ENCODE measurements at regions of chr15 and their contacts with region 1.

Region 1: DNA sequence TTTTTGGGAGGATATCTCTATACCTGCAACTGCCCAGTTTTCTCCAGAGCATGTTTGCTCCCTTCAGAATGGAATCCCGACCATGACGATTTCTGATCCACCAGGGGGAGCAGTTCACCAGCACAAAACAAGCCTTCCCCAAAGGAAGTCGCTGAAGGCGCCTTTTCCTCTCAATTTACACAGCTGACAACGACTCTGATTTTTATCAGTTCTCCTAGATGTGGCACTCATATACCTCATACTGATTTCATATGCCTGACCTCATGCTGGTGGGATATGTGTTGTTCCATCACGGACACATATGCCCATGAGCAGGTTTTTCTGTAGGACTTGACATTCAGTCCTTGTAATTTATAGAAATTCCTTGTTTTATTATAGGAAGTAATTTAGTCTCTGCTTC is 1028.2 kb downstream of the MCTP2 start:
- DNase-seq: peak; percentile 68
- ATAC-seq: peak; percentile 30
- H3K4me3 Mint-ChIP-seq: no peak overlapping the region
- H3K27ac Mint-ChIP-seq: no peak overlapping the region
- H3K4me1 Mint-ChIP-seq: no peaks in the 10 kb centered on the region
- H3K27me3 Mint-ChIP-seq: peaks cover 31% of the 10 kb centered on the region

Region 2: DNA sequence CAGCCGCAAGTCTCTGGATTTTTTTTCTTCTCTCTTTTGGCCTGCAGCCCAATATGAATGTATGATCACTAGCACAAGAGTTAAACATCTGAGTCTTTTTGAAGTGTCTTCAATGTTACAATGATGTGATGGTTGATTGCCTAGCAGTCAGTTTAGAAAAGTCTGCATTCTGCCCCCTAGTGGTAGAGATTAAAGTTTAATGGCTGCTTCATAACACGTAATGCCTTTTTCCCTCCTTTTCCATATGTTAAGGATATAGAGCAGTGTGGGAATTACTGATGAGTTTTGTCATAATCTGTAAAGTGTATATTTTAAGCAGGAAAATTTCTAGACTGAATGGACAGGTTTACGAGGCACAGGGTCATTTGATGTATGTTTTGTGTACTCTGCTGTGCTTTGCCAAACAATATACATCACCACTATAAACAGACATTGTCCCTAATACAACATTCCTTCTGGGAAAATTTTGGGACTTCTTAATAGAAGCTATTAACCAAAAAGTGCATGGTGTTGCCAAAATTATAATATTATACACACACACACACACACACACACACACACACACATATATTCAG is 32.5 kb after region 1 on chr15:
- CTCF ChIA-PET with region 1: interaction called, 5 read pairs
- POLR2A ChIA-PET with region 1: no interaction called
- intact Hi-C with region 1: loop called in 1 of 2 experiments (anchors 1 kb)
- DNase-seq: no peak
- ATAC-seq: no peak
- H3K4me3 Mint-ChIP-seq: no peak overlapping the region
- H3K27ac Mint-ChIP-seq: no peak overlapping the region
- H3K4me1 Mint-ChIP-seq: no peaks in the 10 kb centered on the region
- H3K27me3 Mint-ChIP-seq: peaks cover 29% of the 10 kb centered on the region

Region 3: GRCh38 chr15:95826412-95827195 is 567.1 kb after region 1 on chr15:
- CTCF ChIA-PET with region 1: interaction called, 3 read pairs
- POLR2A ChIA-PET with region 1: no interaction called
- intact Hi-C with region 1: loop called in 1 of 2 experiments (anchors 10 kb)
- DNase-seq: peak; percentile 6
- ATAC-seq: no peak
- H3K4me3 Mint-ChIP-seq: no peak overlapping the region
- H3K27ac Mint-ChIP-seq: no peak overlapping the region
- H3K4me1 Mint-ChIP-seq: no peaks in the 10 kb centered on the region
- H3K27me3 Mint-ChIP-seq: no peaks in the 10 kb centered on the region

Region 4: DNA sequence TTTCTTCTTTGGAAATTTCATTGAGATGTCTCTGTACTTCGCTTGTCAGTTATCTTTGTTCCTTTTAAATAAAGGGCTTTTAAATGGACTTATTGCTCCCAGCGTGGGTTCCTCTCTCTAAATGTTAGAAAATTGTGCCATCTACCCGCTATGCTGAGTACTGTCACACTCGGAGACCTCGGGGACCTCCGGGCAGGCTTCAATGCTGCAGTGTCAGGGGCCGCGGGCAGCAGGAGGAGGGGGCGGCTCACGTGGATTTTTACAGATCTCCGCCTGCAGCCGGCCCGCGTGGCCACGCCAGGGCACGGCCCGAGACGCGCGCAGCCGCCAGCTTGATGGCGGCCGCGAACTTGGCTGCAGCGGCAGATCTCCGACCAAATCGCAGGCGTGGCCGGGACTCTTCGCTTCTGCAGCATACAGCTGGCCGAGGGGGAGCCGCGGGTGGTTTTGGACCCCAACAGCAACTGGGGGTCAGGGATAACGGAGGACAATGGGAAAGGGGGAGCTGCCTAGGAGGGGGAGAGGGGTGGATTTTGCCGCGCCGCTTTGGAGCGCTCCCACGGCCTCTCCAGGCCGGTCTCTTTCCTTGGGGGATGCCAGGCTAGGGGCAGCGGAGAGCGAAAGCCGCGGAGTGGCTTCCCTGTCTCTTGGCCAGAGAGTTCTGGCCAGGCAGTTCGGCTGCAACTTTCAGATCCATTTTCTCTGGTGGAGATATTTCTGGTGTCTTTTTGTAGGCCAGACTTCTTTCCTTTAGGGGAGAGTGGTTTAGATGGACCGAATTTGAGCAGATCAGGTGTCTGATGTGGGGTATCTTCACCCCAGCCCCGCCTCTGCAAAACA is 1086.3 kb after region 1 on chr15:
- CTCF ChIA-PET with region 1: no interaction called
- POLR2A ChIA-PET with region 1: no interaction called
- intact Hi-C with region 1: loop called (anchors 1 to 5 kb)
- DNase-seq: no peak
- ATAC-seq: no peak
- H3K4me3 Mint-ChIP-seq: no peak overlapping the region
- H3K27ac Mint-ChIP-seq: no peak overlapping the region
- H3K4me1 Mint-ChIP-seq: peaks cover 3% of the 10 kb centered on the region
- H3K27me3 Mint-ChIP-seq: peaks cover 86% of the 10 kb centered on the region

Region 5: GRCh38 chr15:97234851-97235610 is 1975.5 kb after region 1 on chr15:
- CTCF ChIA-PET with region 1: no interaction called
- POLR2A ChIA-PET with region 1: no interaction called
- intact Hi-C with region 1: loop called (anchors 10 kb)
- DNase-seq: peak; percentile 49
- ATAC-seq: no peak
- H3K4me3 Mint-ChIP-seq: no peak overlapping the region
- H3K27ac Mint-ChIP-seq: no peak overlapping the region
- H3K4me1 Mint-ChIP-seq: no peaks in the 10 kb centered on the region
- H3K27me3 Mint-ChIP-seq: peaks cover 8% of the 10 kb centered on the region

Measured in activated CD4-positive, alpha-beta T cell treated with anti-CD3 and anti-CD28 coated beads for 36 hours (primary cell).